ENCODE measurements at regions of chr15 and their contacts with region 1.

Region 1: GRCh38 chr15:59299929-59300617 is 72.6 kb downstream of the MYO1E start:
- DNase-seq: peak; percentile 58
- ATAC-seq: peak; percentile 76
- H3K4me3 Mint-ChIP-seq: peak overlapping the region; percentile 71
- H3K27ac Mint-ChIP-seq: peak overlapping the region; percentile 94
- H3K4me1 Mint-ChIP-seq: peaks cover 93% of the 10 kb centered on the region
- H3K27me3 Mint-ChIP-seq: no peaks in the 10 kb centered on the region
- CTCF ChIP-seq: no peak

Region 2: GRCh38 chr15:58924327-58924726 is 375.7 kb before region 1 on chr15:
- CTCF ChIA-PET with region 1: no interaction called
- POLR2A ChIA-PET with region 1: no interaction called
- intact Hi-C with region 1: no loop called
- DNase-seq: no peak
- ATAC-seq: no peak
- H3K4me3 Mint-ChIP-seq: no peak overlapping the region
- H3K27ac Mint-ChIP-seq: peak overlapping the region; percentile 56
- H3K4me1 Mint-ChIP-seq: peaks cover 27% of the 10 kb centered on the region
- H3K27me3 Mint-ChIP-seq: no peaks in the 10 kb centered on the region
- CTCF ChIP-seq: no peak

Region 3: DNA sequence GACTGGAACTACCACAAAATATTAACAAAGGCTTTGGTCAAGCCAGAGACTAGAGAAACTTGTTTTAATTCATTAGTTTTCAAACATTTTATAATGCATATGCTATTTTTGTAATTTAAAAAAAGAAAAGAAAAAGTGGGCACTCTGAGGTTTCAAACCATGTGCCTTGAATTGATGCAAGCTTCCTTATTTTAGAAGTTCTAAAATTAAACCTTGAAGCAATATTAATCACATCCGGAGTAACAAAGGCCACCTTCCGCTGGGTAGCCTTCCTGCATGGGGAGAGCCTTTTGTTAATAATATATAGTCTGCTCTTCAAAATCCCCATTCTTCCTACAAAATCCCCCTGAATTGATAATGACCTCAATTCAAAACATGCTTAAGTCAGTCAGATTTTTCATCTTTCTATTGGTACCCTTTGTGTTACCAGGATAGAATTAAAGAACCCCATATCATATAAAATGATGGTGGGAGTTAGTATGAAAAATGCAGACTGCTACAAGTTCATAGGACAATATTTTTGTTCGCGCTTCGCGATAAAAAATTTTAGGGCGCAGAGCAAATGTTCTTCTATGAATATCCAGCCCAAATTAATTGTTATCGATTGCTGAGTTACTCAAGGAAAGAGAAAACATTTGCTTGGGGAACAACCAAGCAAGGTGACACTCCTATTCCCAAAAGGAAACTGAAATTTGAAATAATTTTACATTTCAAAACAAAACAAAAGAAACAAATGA is 62.8 kb before region 1 on chr15:
- CTCF ChIA-PET with region 1: no interaction called
- POLR2A ChIA-PET with region 1: interaction called, 12 read pairs
- intact Hi-C with region 1: loop called (anchors 1 kb)
- DNase-seq: no peak
- ATAC-seq: peak; percentile 84
- H3K4me3 Mint-ChIP-seq: peak overlapping the region; percentile 48
- H3K27ac Mint-ChIP-seq: peak overlapping the region; percentile 88
- H3K4me1 Mint-ChIP-seq: peaks cover 46% of the 10 kb centered on the region
- H3K27me3 Mint-ChIP-seq: no peaks in the 10 kb centered on the region
- CTCF ChIP-seq: no peak

Region 4: DNA sequence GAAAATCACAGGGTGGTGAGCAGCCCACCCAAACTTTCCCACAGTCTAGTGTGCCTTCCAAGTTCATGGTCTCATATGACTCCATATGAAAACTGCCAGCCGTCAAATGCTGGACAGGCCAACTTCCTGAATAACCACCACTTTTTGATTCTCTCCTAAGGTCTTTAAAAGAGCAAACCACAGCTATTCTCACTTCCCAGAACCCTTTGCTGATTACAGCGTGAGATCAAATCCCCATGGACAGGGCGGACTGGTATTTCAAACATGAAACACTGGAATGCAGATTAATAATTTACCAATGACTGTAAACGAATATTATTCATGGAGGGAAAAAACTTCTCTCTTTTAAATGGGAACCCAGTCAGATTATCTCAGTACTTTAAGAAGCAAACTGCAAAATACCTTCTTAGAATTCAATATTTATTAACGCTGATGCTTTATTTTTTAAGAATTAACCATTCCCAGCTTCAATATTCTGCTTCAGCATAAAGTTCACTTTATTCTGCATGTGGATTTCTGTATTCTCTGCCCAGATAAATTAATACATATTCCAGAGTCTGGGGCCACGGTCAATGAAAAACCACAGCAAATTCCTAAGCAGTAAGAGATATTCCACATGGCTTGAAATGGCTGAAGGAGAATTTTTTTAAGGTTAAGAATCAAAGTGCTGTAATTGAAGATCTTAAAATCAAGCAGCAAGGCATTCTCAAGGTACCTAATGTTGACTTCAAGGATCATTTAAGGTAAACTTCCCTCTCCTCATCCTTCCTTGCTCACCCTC is 29.7 kb after region 1 on chr15:
- CTCF ChIA-PET with region 1: interaction called, 4 read pairs
- POLR2A ChIA-PET with region 1: interaction called, 10 read pairs
- intact Hi-C with region 1: loop called (anchors 2 kb)
- DNase-seq: no peak
- ATAC-seq: no peak
- H3K4me3 Mint-ChIP-seq: no peak overlapping the region
- H3K27ac Mint-ChIP-seq: no peak overlapping the region
- H3K4me1 Mint-ChIP-seq: peaks cover 84% of the 10 kb centered on the region
- H3K27me3 Mint-ChIP-seq: no peaks in the 10 kb centered on the region
- CTCF ChIP-seq: no peak

Region 5: GRCh38 chr15:59372352-59373211 is 72.5 kb after region 1 on chr15 and contains the start of gene MYO1E:
- CTCF ChIA-PET with region 1: interaction called, 3 read pairs
- POLR2A ChIA-PET with region 1: interaction called, 15 read pairs
- intact Hi-C with region 1: loop called (anchors 1 kb)
- DNase-seq: peak; percentile 54
- ATAC-seq: peak; percentile 62
- H3K4me3 Mint-ChIP-seq: peak within 1 kb of the TSS; percentile 96
- H3K27ac Mint-ChIP-seq: peak within 1 kb of the TSS; percentile 89
- H3K4me1 Mint-ChIP-seq: peaks cover 64% of the 10 kb centered on the region
- H3K27me3 Mint-ChIP-seq: no peaks in the 10 kb centered on the region
- CTCF ChIP-seq: no peak
- total RNA-seq, gene MYO1E: 185 and 186 TPM in 2 replicates

Region 6: GRCh38 chr15:59484399-59484798 is 184.3 kb after region 1 on chr15:
- CTCF ChIA-PET with region 1: interaction called, 4 read pairs
- POLR2A ChIA-PET with region 1: interaction called, 3 read pairs
- intact Hi-C with region 1: loop called (anchors 2 kb)
- DNase-seq: no peak
- ATAC-seq: no peak
- H3K4me3 Mint-ChIP-seq: no peak overlapping the region
- H3K27ac Mint-ChIP-seq: no peak overlapping the region
- H3K4me1 Mint-ChIP-seq: peaks cover 12% of the 10 kb centered on the region
- H3K27me3 Mint-ChIP-seq: no peaks in the 10 kb centered on the region
- CTCF ChIP-seq: no peak